SK-N-SH (cell line): ENCODE measurements at regions of chr1 and their contacts with region 1.

Region 1: DNA sequence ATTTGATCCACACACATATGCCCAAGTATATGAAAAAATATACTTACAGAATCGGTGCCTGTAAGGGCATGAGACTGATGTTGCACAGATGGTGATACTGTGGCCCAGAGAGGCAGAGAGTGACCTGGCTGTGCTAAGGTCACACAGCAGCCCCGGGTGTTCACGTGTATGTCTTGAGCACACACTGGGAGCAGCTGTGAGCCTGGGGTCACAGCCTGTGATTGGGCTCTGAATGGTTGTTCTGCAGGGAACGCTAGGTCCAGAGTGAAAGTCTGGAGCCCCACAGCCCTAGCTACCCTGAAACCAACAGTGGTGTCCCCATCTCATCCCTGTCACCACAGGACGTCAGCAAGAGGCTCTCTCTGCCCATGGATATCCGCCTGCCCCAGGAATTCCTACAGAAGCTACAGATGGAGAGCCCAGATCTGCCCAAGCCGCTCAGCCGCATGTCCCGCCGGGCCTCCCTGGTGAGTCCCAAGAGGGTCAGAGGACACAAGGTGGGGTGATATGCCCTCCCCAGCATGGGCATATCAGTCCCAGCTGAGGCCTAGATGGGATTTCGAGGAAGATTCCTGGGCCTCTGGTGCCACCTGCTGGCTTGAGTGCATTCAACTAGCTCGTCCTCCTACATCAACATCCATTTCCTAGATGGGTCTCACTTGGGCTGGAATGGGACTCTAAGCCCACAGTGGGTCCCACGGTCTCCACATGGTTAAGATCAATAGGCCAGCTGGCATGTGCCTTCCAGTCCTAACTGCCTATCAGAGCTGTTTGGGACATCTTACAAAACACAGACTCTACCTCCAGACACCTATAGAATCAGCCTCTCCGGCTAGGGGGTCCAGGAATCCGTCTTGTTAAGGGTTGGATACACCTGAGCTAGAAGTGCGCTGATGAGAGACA is 19.7 kb downstream of the CDK18 start:
- DNase-seq: peak; percentile 87
- H3K4me3 ChIP-seq: peak overlapping the region in 1 of 2 experiments; percentile 14; a peak in 1 of 4 replicates
- H3K27ac ChIP-seq: no peak overlapping the region
- H3K4me1 ChIP-seq: peaks cover 0 to 12% of the 10 kb centered on the region in 2 experiments; a peak in 2 of 4 replicates
- H3K27me3 ChIP-seq: no peaks in the 10 kb centered on the region
- CTCF ChIP-seq: peak; percentile 81
- EP300 ChIP-seq: no peak
- RAD21 ChIP-seq: peak; percentile 98

Region 2: DNA sequence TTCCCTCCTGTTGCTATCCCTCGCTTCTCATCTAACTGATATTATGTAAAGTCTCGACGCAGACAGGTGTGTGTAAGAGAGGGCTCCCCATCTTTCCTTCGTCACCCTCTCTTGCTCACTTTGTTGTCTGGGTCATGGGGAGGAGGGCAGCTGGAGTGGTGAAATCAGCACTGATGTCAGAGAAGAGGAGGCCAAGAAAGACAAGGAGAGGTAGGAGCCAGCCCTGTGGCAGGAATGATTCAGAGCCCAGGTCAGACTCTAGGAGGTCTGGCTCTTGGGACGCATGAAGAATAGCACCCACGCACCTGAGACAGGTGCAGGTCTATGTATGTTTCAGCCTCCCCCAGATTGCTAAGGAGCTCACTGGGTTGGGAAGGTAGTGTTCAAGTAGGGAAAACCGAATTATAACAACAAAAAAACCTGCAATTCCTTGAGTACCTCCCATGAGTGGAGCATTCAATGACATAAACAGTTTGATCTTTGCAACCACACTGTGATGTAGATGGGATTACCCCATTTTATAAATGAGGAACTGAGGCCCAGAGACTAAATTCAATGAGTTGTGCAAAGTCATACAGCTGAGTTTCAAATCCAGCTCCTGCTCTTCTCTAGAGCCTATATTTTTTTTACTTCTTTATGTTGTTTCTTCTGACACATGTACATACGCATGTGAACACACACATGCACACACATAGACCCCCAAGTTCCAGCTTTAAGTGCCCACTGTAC is 213.0 kb before region 1 on chr1:
- CTCF ChIA-PET with region 1: no interaction called
- POLR2A ChIA-PET with region 1: no interaction called
- DNase-seq: no peak
- H3K4me3 ChIP-seq: no peak overlapping the region
- H3K27ac ChIP-seq: no peak overlapping the region
- H3K4me1 ChIP-seq: peaks cover 0 to 6% of the 10 kb centered on the region in 2 experiments; a peak in 2 of 4 replicates
- H3K27me3 ChIP-seq: no peaks in the 10 kb centered on the region
- CTCF ChIP-seq: no peak
- EP300 ChIP-seq: no peak
- RAD21 ChIP-seq: no peak

Region 3: DNA sequence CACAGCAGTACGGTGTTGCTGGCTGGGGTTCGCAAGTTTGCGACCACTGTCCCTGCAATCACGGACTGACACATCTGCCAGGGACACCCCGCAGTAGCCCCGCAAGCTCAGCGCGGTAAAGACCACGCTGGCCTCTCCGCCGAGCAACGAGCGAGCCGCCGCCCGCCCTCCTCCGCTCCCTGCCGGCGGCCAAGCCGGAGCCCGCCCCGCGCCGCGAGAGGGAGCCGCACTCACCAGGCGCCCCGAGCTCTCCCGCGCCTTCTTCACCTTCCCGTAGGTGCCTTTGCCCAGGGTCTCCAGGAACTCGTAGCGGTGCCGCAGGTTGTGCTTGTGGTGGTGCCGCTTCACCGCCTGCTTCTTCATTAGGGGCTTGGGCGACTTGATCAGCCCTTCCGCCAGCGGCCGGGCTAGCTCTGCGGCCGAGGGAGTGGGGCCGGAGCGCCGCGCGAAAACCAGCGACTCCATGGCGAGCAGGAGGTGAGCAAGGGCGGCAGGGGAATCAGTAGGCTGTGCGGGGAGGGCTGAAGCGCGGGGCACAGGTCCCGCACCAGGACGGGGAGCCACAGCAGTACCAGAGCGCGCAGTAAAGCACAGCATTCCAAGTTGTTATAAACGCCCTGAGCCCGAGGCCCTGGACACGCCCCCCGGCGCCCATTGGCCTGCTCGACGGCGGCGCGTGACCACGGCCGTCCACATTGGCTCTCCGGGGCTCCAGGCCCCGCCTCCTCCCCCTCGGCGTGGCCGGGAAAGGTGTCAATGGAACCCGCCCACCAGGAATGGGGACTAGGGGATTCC is 202.8 kb before region 1 on chr1 and contains the start of gene NUAK2:
- CTCF ChIA-PET with region 1: interaction called, 21 read pairs
- POLR2A ChIA-PET with region 1: no interaction called
- DNase-seq: peak; percentile 94
- H3K4me3 ChIP-seq: peak within 1 kb of the TSS; percentile 78 to 95
- H3K27ac ChIP-seq: peak within 1 kb of the TSS in 1 of 2 experiments; percentile 75; a peak in 2 of 4 replicates
- H3K4me1 ChIP-seq: peaks cover 19 to 31% of the 10 kb centered on the region in 2 experiments
- H3K27me3 ChIP-seq: no peaks in the 10 kb centered on the region
- CTCF ChIP-seq: peak; percentile 45
- EP300 ChIP-seq: no peak
- RAD21 ChIP-seq: no peak
- polyA plus RNA-seq, gene NUAK2: 6.8 and 11.1 TPM in 2 replicates

Region 4: DNA sequence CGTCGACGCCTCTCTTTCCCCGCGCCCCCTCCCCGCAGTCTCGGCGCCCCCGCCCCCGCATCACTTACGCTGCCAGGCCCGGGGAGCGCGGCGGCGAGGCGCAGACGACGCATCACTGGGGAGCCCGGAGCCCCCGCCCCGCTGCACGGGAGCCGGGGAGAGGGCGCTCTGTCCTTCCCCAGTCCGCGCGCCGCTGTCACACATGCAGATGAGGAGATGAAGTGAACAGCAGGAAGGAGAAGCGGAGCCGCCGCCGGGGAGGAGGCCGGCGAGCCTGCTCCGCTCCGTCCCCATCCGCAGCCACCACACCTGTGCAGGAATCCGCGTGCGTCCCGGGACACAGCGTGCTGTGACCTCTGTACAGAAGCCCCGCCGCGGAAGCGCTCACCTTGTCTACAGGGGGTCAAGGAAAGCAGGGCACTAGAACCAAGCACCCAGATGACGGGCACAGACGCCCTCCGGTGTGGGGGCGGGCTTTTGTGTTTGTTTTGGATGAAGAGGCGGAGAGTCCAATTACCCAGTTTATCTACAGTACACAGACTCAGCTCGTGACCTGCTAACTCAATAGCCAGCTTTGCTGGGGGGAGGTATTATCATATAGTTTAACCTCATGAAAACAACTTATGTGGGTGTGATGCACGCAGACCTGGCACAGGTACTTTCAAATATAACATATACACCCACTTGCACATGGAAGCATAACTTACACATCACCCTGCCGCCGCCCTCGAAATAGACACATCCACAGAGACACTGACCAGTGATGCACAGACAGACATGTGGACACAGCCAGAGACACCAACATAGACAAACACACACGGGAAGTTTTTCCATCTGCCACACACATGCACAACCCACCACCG is 179.8 kb before region 1 on chr1:
- CTCF ChIA-PET with region 1: interaction called, 30 read pairs
- POLR2A ChIA-PET with region 1: no interaction called
- DNase-seq: peak; percentile 77
- H3K4me3 ChIP-seq: peak overlapping the region; percentile 41 to 56
- H3K27ac ChIP-seq: no peak overlapping the region
- H3K4me1 ChIP-seq: peaks cover 0 to 7% of the 10 kb centered on the region in 2 experiments; a peak in 1 of 4 replicates
- H3K27me3 ChIP-seq: peaks cover 11% of the 10 kb centered on the region; the same call in 1 of the 2 replicates
- CTCF ChIP-seq: no peak
- EP300 ChIP-seq: no peak
- RAD21 ChIP-seq: no peak

Region 5: GRCh38 chr1:205391386-205391785 is 132.8 kb before region 1 on chr1:
- CTCF ChIA-PET with region 1: interaction called, 72 read pairs
- POLR2A ChIA-PET with region 1: no interaction called
- DNase-seq: no peak
- H3K4me3 ChIP-seq: no peak overlapping the region
- H3K27ac ChIP-seq: no peak overlapping the region
- H3K4me1 ChIP-seq: no peaks in the 10 kb centered on the region; a peak in 1 of 4 replicates
- H3K27me3 ChIP-seq: no peaks in the 10 kb centered on the region; the same call in 1 of the 2 replicates
- CTCF ChIP-seq: no peak
- EP300 ChIP-seq: no peak
- RAD21 ChIP-seq: no peak

Region 6: DNA sequence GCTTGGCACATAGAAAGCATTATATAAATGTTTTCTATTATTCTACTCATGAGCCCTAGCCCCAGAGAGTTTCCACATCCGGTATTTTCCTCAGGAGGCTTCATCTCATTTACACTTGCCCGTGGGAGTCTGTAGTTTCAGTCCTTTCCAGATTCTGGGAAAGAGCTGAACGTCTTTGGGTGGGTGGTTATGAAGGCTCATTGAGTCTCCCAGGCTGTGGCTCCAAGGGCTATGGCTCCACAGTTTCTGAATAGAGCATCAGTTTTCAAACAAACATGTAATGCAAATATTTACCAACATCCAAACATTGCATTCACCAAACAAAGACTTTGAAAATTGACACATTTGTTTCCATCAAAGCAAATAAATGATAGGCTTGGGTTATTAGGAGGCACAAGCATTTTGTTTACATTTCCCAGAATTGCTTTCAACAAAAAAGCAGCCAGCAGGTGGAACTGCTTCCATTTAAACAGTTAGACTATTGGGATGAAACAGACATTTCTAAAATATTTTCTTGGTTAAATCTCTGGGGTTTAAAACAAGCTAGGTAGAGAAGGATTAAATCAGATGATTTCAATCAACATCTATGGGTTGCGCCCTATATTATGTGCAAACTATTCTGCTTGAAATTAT is 101.0 kb before region 1 on chr1:
- CTCF ChIA-PET with region 1: interaction called, 12 read pairs
- POLR2A ChIA-PET with region 1: no interaction called
- DNase-seq: no peak
- H3K4me3 ChIP-seq: no peak overlapping the region
- H3K27ac ChIP-seq: no peak overlapping the region
- H3K4me1 ChIP-seq: peaks cover 0 to 11% of the 10 kb centered on the region in 2 experiments; a peak in 2 of 4 replicates
- H3K27me3 ChIP-seq: peaks cover 34% of the 10 kb centered on the region
- CTCF ChIP-seq: no peak
- EP300 ChIP-seq: no peak
- RAD21 ChIP-seq: peak; percentile 22; the same call in 1 of the 2 replicates

Region 7: GRCh38 chr1:205543411-205544301 is 19.5 kb after region 1 on chr1:
- CTCF ChIA-PET with region 1: interaction called, 23 read pairs
- POLR2A ChIA-PET with region 1: interaction called, 4 read pairs
- DNase-seq: peak; percentile 78
- H3K4me3 ChIP-seq: peak overlapping the region in 1 of 2 experiments; percentile 37; a peak in 2 of 4 replicates
- H3K27ac ChIP-seq: peak overlapping the region; percentile 23 to 88; a peak in 3 of 4 replicates
- H3K4me1 ChIP-seq: peaks cover 0 to 8% of the 10 kb centered on the region in 2 experiments; a peak in 1 of 4 replicates
- H3K27me3 ChIP-seq: no peaks in the 10 kb centered on the region
- CTCF ChIP-seq: no peak
- EP300 ChIP-seq: no peak
- RAD21 ChIP-seq: no peak

Region 8: DNA sequence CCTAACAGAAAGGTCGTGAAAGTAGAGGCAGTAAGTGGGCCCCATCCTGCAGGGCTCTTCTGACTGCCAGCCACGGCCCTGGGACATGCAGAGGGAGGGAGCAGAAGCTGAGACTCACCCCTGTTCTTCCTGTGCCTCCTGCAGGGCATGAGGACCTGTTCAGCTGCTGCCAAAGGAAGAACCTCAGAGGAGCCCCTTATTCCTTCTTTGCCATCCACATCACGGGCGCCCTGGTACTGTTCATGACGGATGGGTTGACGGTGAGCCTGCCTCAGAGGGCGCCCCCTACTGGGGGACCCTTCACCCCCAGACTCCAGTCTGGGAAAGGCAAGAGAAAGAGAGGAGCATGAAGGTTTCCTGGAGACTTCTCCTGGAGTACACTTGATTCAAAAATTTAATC is 60.6 kb after region 1 on chr1:
- CTCF ChIA-PET with region 1: interaction called, 35 read pairs
- POLR2A ChIA-PET with region 1: no interaction called
- DNase-seq: no peak
- H3K4me3 ChIP-seq: no peak overlapping the region
- H3K27ac ChIP-seq: no peak overlapping the region
- H3K4me1 ChIP-seq: peaks cover 0 to 14% of the 10 kb centered on the region in 2 experiments; a peak in 2 of 4 replicates
- H3K27me3 ChIP-seq: no peaks in the 10 kb centered on the region; the same call in 1 of the 2 replicates
- CTCF ChIP-seq: peak; percentile 56
- EP300 ChIP-seq: no peak
- RAD21 ChIP-seq: no peak

Region 9: GRCh38 chr1:205604825-205605505 is 80.8 kb after region 1 on chr1:
- CTCF ChIA-PET with region 1: no interaction called
- POLR2A ChIA-PET with region 1: no interaction called
- DNase-seq: no peak
- H3K4me3 ChIP-seq: no peak overlapping the region
- H3K27ac ChIP-seq: no peak overlapping the region
- H3K4me1 ChIP-seq: peaks cover 3 to 12% of the 10 kb centered on the region in 2 experiments; a peak in 3 of 4 replicates
- H3K27me3 ChIP-seq: no peaks in the 10 kb centered on the region
- CTCF ChIP-seq: no peak
- EP300 ChIP-seq: no peak
- RAD21 ChIP-seq: no peak

Region 10: GRCh38 chr1:205963352-205964155 is 439.4 kb after region 1 on chr1:
- CTCF ChIA-PET with region 1: no interaction called
- POLR2A ChIA-PET with region 1: no interaction called
- DNase-seq: no peak
- H3K4me3 ChIP-seq: no peak overlapping the region
- H3K27ac ChIP-seq: no peak overlapping the region
- H3K4me1 ChIP-seq: no peaks in the 10 kb centered on the region
- H3K27me3 ChIP-seq: peaks cover 21% of the 10 kb centered on the region; the same call in 1 of the 2 replicates
- CTCF ChIP-seq: no peak
- EP300 ChIP-seq: no peak
- RAD21 ChIP-seq: no peak